Left lung (tissue), 14 donors: ENCODE measurements at regions of chr22 and their contacts with region 1.

Region 1: DNA sequence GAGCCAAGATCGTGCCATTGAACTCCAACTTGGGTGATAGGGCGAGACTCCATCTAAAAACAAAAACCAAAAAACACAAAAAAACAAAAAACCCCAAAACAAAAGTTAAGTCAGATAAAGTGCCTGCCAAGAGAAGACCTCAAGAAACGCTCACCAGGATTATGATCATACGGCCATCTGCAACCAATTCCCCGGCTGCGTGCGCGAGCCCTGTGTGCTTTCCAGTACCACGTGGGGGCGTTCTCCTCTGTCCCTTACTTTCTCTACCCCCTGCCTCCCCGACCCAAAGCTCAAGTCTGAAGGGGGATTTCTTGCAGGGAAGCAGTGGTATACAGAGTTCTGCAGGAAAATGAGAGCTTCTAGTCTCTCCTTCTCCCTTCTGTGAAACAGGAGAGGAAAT is 10.5 kb upstream of the RPS19BP1 start:
- DNase-seq: no peak
- ATAC-seq: no peak
- H3K4me3 ChIP-seq: no peak overlapping the region
- H3K27ac ChIP-seq: no peak overlapping the region
- H3K4me1 ChIP-seq: no peaks in the 10 kb centered on the region
- H3K27me3 ChIP-seq: peaks cover 0 to 58% of the 10 kb centered on the region in 2 donors
- CTCF ChIP-seq: no peak

Region 2: DNA sequence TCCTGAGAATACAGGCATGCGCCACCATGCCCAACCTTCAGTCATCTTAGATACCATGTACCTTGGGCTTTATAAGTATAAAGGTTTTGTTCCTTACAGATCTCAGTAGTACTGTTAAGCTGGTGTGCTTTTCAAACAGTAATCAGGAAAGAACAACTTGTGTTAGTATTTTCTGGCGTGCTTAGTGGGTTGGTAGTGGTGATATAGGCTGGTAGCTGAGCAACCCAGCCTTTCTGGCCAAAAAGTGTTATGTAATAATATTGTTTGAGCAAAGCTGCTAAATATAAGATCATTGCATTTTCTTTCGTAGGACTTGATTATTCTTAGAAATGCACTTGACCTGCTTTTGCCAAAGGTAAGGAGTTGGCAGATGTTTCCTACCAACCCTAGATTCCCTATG is 809.7 kb after region 1 on chr22:
- intact Hi-C with region 1: loop called in 1 of 2 experiments (anchors 10 kb)
- DNase-seq: no peak
- ATAC-seq: no peak
- H3K4me3 ChIP-seq: no peak overlapping the region
- H3K27ac ChIP-seq: no peak overlapping the region
- H3K4me1 ChIP-seq: peaks cover 3 to 11% of the 10 kb centered on the region in 2 donors
- H3K27me3 ChIP-seq: no peaks in the 10 kb centered on the region
- CTCF ChIP-seq: no peak